Common myeloid progenitor, CD34-positive (primary cell): ENCODE measurements at regions of chr7 and their contacts with region 1.

Region 1: DNA sequence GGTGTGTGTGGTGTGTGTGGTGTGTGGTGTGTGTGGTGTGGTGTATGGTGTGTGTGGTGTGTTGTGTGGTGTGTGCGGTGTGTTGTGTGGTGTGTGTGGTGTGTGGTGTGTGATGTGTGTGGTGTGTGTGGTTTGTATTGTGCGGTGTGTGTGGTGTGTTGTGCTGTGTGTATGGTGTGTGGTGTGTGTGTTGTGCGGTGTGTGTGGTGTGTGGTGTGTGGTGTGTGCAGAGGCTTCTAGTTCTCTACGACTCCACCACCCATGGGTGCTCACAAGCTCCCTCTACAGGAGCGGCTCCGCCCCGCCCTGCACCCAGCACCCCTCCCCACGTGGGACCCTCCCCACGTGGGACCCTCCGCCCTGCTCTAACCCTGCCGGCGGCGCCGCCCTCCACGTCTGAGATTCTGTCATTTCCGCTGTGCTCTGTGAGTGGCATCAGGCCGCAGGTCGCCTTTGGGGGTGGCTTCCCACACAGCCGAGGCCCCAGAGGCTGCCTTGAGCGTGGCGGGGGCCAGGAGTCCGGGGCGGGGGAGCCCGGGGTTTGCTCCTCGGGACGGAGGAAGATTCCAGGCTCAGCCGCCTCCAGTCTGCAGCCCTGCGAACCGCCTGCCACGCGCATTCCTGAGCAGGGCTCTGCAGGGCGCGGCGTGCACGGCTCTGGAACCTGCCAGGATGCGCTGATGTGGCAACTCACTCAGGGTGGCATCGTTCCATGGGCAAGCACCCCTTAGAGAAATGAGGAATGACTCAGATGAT is 37.0 kb upstream of the DNAJB6 start:
- DNase-seq: peak; percentile 75 to 93 (median 91)
- H3K4me3 ChIP-seq: no peak overlapping the region
- H3K27ac ChIP-seq: peak overlapping the region; percentile 98 to 99
- H3K4me1 ChIP-seq: peaks cover 5 to 68% (median 59%) of the 10 kb centered on the region in 4 experiments
- H3K27me3 ChIP-seq: no peaks in the 10 kb centered on the region

Region 2: DNA sequence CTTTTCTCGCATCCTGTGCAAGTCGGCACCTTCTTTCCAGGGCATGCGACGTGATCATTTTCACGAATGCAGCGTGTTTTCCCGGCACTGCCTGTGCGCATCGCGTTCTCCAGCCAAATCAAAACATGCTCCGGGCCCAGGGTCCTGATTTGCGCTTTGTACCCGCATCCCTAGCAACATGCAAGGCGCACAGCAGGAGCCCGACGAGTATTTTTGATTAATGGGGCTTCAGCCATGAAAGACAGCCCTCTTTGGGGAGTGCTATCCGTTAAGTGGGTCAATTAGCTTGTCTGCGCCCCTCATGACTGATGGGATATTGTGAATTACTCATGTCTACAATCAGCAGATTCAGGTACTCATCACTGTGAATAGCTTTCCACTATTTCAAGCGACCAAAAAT is 902.5 kb before region 1 on chr7:
- CTCF ChIA-PET with region 1: no interaction called
- POLR2A ChIA-PET with region 1: no interaction called
- DNase-seq: no peak
- H3K4me3 ChIP-seq: no peak overlapping the region
- H3K27ac ChIP-seq: no peak overlapping the region
- H3K4me1 ChIP-seq: no peaks in the 10 kb centered on the region
- H3K27me3 ChIP-seq: peaks cover 0 to 1% (median 0%) of the 10 kb centered on the region in 5 experiments

Region 3: GRCh38 chr7:157273208-157274093 is 26.3 kb before region 1 on chr7:
- CTCF ChIA-PET with region 1: interaction called, 26 read pairs
- POLR2A ChIA-PET with region 1: interaction called, 4 read pairs
- DNase-seq: peak; percentile 71 to 83 (median 82)
- H3K4me3 ChIP-seq: peak overlapping the region in 1 of 7 experiments; percentile 16
- H3K27ac ChIP-seq: no peak overlapping the region
- H3K4me1 ChIP-seq: peaks cover 0 to 46% (median 32%) of the 10 kb centered on the region in 4 experiments
- H3K27me3 ChIP-seq: no peaks in the 10 kb centered on the region

Region 4: GRCh38 chr7:157278791-157279724 is 20.7 kb before region 1 on chr7:
- CTCF ChIA-PET with region 1: interaction called, 26 read pairs
- POLR2A ChIA-PET with region 1: interaction called, 4 read pairs
- DNase-seq: peak in 1 of 3 donors; percentile 31
- H3K4me3 ChIP-seq: peak overlapping the region in 6 of 7 experiments; percentile 18 to 72 (median 59)
- H3K27ac ChIP-seq: no peak overlapping the region
- H3K4me1 ChIP-seq: peaks cover 0 to 53% (median 41%) of the 10 kb centered on the region in 4 experiments
- H3K27me3 ChIP-seq: peaks cover 0 to 4% (median 0%) of the 10 kb centered on the region in 5 experiments

Region 5: GRCh38 chr7:157312941-157313340 is 13.2 kb after region 1 on chr7:
- CTCF ChIA-PET with region 1: interaction called, 11 read pairs
- POLR2A ChIA-PET with region 1: interaction called, 13 read pairs
- DNase-seq: peak in 2 of 3 donors; percentile 27 to 29
- H3K4me3 ChIP-seq: no peak overlapping the region
- H3K27ac ChIP-seq: no peak overlapping the region
- H3K4me1 ChIP-seq: peaks cover 0 to 25% (median 17%) of the 10 kb centered on the region in 4 experiments
- H3K27me3 ChIP-seq: no peaks in the 10 kb centered on the region

Region 6: DNA sequence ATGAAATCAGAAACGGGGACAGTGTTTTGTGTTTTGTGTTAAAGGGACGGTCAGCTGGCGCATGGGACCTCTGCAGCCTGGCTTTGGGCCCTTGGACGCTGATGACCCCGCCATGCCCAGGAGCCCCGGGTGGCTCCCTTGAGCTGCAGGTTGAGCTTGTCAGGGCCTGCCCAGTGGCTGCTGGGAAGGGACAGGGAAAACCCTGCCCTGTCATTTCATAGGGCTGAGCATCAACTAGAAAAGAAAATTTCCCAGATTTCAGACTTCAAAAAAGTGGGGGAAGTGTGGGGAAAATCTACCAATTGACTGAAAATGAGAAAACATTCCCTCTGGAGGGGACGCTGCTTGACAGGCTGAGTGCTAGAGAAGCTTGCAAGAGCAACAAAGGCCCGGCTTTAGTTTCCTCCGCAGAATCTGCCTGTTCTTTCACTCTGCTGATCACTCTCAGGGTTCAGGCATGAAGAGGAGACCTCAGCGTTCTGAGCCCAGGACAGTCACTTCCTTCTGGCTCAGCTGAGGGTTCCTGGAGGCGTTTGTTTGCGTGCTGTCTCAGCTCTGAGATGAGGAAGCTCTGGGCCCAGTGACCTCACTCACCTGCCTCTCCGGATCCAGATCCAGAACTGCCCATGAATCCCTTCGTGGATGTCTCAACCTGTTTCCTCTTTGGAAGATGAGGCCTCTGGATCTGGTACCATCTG is 18.4 kb after region 1 on chr7:
- CTCF ChIA-PET with region 1: interaction called, 11 read pairs
- POLR2A ChIA-PET with region 1: interaction called, 13 read pairs
- DNase-seq: peak; percentile 70 to 90 (median 87)
- H3K4me3 ChIP-seq: peak overlapping the region in 3 of 7 experiments; percentile 26 to 45 (median 35)
- H3K27ac ChIP-seq: peak overlapping the region; percentile 80 to 86
- H3K4me1 ChIP-seq: peaks cover 3 to 40% (median 36%) of the 10 kb centered on the region in 4 experiments
- H3K27me3 ChIP-seq: no peaks in the 10 kb centered on the region

Region 7: GRCh38 chr7:157397731-157398691 is 98.2 kb after region 1 on chr7:
- CTCF ChIA-PET with region 1: no interaction called
- POLR2A ChIA-PET with region 1: no interaction called
- DNase-seq: peak; percentile 66 to 75 (median 75)
- H3K4me3 ChIP-seq: peak overlapping the region in 3 of 7 experiments; percentile 27 to 65 (median 43)
- H3K27ac ChIP-seq: peak overlapping the region; percentile 62 to 81
- H3K4me1 ChIP-seq: peaks cover 6 to 86% (median 74%) of the 10 kb centered on the region in 4 experiments
- H3K27me3 ChIP-seq: no peaks in the 10 kb centered on the region